ENCODE measurements at regions of chr7 and their contacts with region 1.

Region 1: GRCh38 chr7:65475734-65476319 is 102.2 kb downstream of the ZNF92 start:
- DNase-seq: peak; percentile 99
- H3K4me3 ChIP-seq: peak overlapping the region; percentile 60
- H3K27ac ChIP-seq: peak overlapping the region; percentile 98
- H3K4me1 ChIP-seq: peaks cover 65% of the 10 kb centered on the region
- CTCF ChIP-seq: no peak

Region 2: DNA sequence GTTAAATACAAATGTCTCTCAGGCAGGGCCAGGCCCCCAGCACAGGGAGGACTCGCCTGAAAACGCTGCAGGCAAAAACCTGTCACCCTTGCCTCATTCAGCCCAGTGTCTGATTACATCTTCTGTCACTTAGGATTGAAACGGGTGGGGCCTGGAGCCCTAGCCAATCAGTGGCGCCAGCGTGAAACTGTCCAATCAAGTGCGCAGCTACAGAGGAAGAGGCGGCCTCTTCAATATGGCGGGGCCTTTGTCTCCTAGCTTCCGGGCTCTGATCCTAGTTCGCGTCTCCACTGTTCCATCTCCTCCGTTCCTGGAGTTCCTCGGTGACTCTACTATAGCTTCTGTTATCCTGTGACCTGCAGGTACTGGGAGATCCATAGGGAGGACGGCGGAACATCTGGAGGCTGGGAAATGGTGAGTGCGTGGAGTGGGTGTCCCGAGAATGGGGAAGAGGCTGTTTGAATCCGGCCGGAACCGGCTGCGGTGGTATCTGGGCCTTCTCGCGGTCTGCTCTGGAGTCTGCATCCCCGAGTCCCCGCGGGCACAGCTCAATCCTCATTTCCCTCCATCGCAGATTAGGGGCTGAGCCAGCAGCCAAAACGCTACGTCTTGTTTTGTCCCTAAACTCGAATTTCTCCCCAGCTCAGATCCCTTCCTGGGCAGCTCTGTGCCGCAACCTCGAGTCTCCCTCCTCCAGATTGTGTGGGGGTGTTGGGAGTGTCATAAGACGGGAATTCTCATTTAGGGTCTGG is 1161.9 kb before region 1 on chr7 and contains the start of gene ZNF736:
- CTCF ChIA-PET with region 1: no interaction called
- POLR2A ChIA-PET with region 1: no interaction called
- intact Hi-C with region 1: loop called (anchors 10 kb)
- DNase-seq: peak; percentile 96
- H3K4me3 ChIP-seq: peak within 1 kb of the TSS; percentile 96
- H3K27ac ChIP-seq: peak within 1 kb of the TSS; percentile 72
- H3K4me1 ChIP-seq: peaks cover 47% of the 10 kb centered on the region
- CTCF ChIP-seq: no peak
- total RNA-seq, gene ZNF736: 68.4 and 72.3 TPM in 2 replicates

Region 3: DNA sequence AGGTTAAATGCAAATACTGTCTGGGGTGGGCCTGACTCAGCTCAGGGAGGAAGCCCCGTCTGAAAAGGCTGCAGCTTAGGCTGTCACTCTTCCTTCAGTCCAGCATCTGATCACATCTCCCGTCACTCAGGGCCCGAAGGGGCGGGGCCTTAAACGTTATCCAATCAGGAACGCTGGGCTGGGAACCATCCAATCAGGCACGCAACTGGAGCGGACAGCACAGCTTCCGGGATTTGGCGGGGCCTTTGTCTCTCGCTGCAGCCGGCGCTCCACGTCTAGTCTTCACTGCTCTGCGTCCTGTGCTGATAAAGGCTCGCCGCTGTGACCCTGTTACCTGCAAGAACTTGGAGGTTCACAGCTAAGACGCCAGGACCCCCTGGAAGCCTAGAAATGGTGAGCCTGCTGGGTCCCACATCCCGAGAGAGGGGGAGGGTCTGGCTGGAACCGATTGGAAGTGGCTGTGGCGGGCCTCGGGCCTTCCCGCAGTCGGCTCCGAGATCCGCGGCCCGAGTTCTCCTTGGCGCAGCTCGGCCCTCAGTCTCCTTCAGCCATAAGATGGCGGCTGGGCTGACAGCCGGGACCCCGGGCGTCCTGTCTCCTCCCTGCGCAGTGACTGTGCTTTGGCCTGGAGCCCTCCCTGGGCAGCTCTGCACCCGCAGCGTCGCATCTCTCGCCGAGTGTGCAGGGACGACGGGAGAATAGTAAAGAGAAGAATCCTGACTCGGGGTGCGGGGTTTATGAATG is 102.0 kb before region 1 on chr7 and contains the start of gene ZNF92:
- CTCF ChIA-PET with region 1: no interaction called
- POLR2A ChIA-PET with region 1: interaction called, 16 read pairs
- intact Hi-C with region 1: loop called (anchors 2 kb)
- DNase-seq: peak; percentile 99
- H3K4me3 ChIP-seq: peak within 1 kb of the TSS; percentile 89
- H3K27ac ChIP-seq: peak within 1 kb of the TSS; percentile 84
- H3K4me1 ChIP-seq: peaks cover 31% of the 10 kb centered on the region
- CTCF ChIP-seq: no peak
- total RNA-seq, gene ZNF92: 31.1 and 31.2 TPM in 2 replicates

Region 4: GRCh38 chr7:65463184-65463583 is 12.6 kb before region 1 on chr7:
- CTCF ChIA-PET with region 1: interaction called, 3 read pairs
- POLR2A ChIA-PET with region 1: interaction called, 14 read pairs
- intact Hi-C with region 1: no loop called
- DNase-seq: no peak
- H3K4me3 ChIP-seq: no peak overlapping the region
- H3K27ac ChIP-seq: no peak overlapping the region
- H3K4me1 ChIP-seq: peaks cover 5% of the 10 kb centered on the region
- CTCF ChIP-seq: no peak

Region 5: DNA sequence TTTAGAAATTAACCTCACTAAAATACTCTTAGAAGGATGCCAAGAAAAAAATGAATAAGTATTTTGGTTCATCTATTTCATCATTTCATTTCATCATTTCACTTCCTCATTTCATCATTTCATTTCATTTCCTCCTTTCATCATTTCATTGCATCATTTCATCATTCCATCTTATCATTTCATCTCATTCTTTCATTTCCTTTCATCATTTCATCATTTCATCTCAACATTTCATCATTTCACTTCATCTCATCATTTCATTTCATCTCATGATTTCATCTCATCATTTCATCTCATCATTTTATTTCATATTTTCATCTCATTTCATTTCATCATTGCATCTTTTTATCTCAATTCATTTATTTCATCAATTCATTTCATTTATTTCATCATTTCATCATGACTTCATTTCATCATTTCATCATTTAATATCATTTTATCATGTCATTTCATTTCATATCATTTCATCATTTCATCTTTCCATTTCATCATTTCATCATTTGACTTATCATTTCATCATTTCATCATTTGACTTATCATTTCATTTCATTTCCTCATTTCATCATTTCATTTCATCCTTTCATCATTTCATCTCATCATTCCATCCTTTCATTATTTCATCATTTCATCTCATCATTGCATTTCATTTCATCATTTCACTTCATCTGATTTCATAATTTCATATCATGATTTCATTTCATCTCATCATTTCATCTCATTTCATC is 27.8 kb after region 1 on chr7:
- CTCF ChIA-PET with region 1: no interaction called
- POLR2A ChIA-PET with region 1: interaction called, 3 read pairs
- intact Hi-C with region 1: loop called (anchors 2 kb)
- DNase-seq: peak; percentile 35
- H3K4me3 ChIP-seq: no peak overlapping the region
- H3K27ac ChIP-seq: peak overlapping the region; percentile 78
- H3K4me1 ChIP-seq: peaks cover 28% of the 10 kb centered on the region
- CTCF ChIP-seq: no peak

Region 6: GRCh38 chr7:65509368-65510186 is 33.8 kb after region 1 on chr7:
- CTCF ChIA-PET with region 1: no interaction called
- POLR2A ChIA-PET with region 1: interaction called, 13 read pairs
- intact Hi-C with region 1: loop called (anchors 2 kb)
- DNase-seq: peak; percentile 78
- H3K4me3 ChIP-seq: peak overlapping the region; percentile 79
- H3K27ac ChIP-seq: peak overlapping the region; percentile 69
- H3K4me1 ChIP-seq: peaks cover 11% of the 10 kb centered on the region
- CTCF ChIP-seq: no peak

Region 7: DNA sequence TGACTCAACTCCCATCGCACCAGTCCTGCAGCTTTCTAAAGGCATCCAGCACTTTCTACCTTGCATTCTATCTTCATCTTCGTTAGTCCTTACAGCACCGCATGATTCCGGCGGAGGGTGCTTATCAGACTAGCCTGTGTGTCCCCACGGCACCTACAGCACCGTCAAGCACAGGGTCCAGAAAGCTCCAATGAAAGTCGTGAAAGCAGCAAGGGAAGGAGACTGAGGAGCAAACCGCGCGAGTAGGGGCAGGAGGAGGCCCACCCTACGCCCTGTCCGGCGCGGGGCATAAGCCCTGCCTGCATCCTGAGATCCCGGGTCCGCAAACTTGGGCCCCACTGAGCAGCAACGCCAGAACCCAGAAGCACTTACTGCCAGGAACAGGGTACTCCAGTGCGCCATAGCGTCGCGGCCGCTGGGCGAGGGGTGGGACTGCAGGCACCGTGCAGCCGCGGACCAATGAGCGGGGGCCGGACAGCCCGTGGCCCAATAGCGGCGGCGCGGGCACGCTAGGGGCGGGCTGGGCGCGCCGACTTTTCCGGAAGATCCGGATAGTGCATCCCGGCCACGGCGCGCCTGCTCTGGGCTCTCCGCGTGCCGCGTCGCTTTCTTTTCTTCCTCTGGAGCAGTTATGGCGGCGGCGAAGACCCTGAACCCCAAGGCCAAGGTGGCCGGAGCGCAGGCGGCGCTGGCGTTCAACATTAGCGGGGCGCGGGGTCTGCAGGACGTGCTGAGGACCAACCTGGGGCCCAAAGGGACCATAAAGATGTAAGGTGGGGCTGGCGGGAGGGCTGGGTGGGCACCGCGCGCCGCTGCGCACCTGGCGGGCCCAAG is 274.9 kb after region 1 on chr7:
- CTCF ChIA-PET with region 1: no interaction called
- POLR2A ChIA-PET with region 1: no interaction called
- intact Hi-C with region 1: no loop called
- DNase-seq: peak; percentile 92
- H3K4me3 ChIP-seq: peak overlapping the region; percentile 90
- H3K27ac ChIP-seq: peak overlapping the region; percentile 59
- H3K4me1 ChIP-seq: peaks cover 18% of the 10 kb centered on the region
- CTCF ChIP-seq: no peak

Measured in OCI-LY7 (cell line).